Activated CD8-positive, alpha-beta T cell treated with anti-CD3 and anti-CD28 coated beads, Interleukin-2, amount 10 ng/mL, durations not matched to agents 7 days and 5 days (primary cell): ENCODE measurements at regions of chr9 and their contacts with region 1.

Region 1: DNA sequence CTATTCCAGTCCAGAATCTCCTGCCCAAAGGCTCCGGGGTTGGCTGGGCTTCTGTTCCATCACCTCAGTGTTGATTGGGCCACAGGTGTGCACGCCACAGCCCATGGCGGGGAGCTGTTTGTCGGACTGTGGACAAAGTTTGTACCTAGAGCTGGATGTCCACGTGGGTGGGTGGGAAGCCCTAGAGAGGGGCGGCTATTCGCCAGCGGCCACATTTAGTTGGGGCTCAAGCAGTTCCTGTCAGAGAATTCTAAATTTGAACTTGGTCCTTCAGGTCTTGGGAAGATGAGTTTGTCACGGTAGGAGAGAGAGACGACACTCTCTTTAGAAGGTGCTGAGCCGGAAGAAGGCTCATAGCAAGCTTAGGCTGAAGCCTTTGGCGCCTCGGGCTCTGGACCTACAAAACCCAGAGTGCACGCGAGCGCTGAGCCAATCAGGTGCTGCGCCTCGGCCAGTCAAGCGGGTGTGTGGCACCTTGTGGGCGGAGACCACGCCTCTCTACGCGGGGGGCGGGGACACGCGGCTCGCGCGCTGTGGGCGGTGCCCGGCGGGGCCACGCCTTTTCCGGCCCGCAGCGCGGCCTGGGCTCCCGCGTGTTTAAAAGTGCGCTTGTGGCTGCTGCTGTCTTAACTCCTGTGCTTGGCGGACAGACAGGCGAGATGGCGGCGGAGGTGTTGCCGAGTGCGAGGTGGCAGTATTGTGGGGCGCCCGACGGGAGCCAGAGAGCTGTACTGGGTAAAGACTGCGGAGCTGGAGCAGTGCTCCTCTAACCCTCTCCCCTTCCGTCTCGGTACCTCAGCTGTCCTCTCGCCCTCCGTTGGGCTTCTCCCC is at the start of gene POLR1E:
- DNase-seq: peak; percentile 97
- ATAC-seq: peak; percentile 97
- H3K4me3 Mint-ChIP-seq: peak within 1 kb of the TSS; percentile 93
- H3K27ac Mint-ChIP-seq: peak within 1 kb of the TSS; percentile 96
- H3K4me1 Mint-ChIP-seq: peaks cover 41% of the 10 kb centered on the region
- H3K27me3 Mint-ChIP-seq: peaks cover 7% of the 10 kb centered on the region
- total RNA-seq, gene POLR1E: 38.2 to 39.0 TPM

Region 2: GRCh38 chr9:37465249-37466036 is 20.2 kb before region 1 on chr9 and contains the start of gene ZBTB5:
- CTCF ChIA-PET with region 1: interaction called, 5 read pairs
- POLR2A ChIA-PET with region 1: interaction called, 31 read pairs
- DNase-seq: peak; percentile 99
- ATAC-seq: peak; percentile 85
- H3K4me3 Mint-ChIP-seq: peak within 1 kb of the TSS; percentile 96
- H3K27ac Mint-ChIP-seq: peak within 1 kb of the TSS; percentile 98
- H3K4me1 Mint-ChIP-seq: peaks cover 32% of the 10 kb centered on the region
- H3K27me3 Mint-ChIP-seq: no peaks in the 10 kb centered on the region
- total RNA-seq, gene ZBTB5: 9.2 to 9.4 TPM

Region 3: GRCh38 chr9:37496020-37496419 is 10.4 kb after region 1 on chr9:
- CTCF ChIA-PET with region 1: no interaction called
- POLR2A ChIA-PET with region 1: interaction called, 20 read pairs
- DNase-seq: no peak
- ATAC-seq: no peak
- H3K4me3 Mint-ChIP-seq: no peak overlapping the region
- H3K27ac Mint-ChIP-seq: no peak overlapping the region
- H3K4me1 Mint-ChIP-seq: peaks cover 5% of the 10 kb centered on the region
- H3K27me3 Mint-ChIP-seq: no peaks in the 10 kb centered on the region